ENCODE measurements at regions of chr14 and their contacts with region 1.

Region 1: GRCh38 chr14:37903343-37904191 is 304.1 kb upstream of the SSTR1 start:
- DNase-seq: peak in 3 of 9 experiments; percentile 5 to 63 (median 57)
- ATAC-seq: no peak
- H3K4me3 ChIP-seq: no peak overlapping the region
- H3K4me3 Mint-ChIP-seq: no peak overlapping the region
- H3K27ac ChIP-seq: no peak overlapping the region
- H3K27ac Mint-ChIP-seq: no peak overlapping the region
- H3K4me1 ChIP-seq: no peaks in the 10 kb centered on the region
- H3K4me1 Mint-ChIP-seq: peaks cover 2% of the 10 kb centered on the region
- H3K27me3 ChIP-seq: no peaks in the 10 kb centered on the region
- H3K27me3 Mint-ChIP-seq: peaks cover 26% of the 10 kb centered on the region
- CTCF ChIP-seq: peak; percentile 82

Region 2: DNA sequence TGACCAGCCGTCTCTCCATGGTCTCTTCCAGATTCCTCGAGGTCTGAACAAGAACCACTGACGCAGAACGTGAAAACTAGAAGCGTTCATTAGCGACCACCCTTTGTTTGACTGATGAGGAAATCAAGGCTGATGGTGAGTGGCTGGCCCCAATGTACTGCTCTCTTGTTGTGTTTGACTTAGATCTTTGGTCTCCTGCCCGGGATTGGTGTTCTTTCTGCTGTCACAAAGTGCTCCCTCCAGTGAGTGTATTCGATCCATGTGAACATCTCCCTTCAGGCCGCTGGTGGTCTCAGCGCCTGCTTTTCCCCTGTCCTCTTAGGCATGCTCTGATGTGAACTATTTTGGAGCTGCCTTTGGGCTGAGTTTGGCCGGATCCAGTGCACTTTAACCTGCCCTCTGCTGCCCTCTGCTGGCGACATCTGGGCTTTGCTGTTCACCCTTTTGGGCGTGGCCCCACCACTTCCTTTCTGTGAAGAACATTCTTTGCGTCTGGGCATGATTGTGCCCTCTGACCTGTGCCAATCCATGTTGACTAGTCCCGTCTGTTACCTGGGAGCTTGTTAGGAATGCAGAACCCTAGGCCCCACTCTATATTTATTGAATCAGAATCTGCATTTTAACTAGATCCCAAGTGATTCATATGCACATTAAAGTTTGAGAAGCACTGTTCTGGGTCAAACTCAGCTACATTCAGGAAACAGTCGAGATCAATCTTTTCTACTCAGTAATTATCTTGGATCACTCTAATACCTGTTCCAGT is 29.0 kb before region 1 on chr14:
- CTCF ChIA-PET with region 1: interaction called, 5 read pairs
- POLR2A ChIA-PET with region 1: no interaction called
- intact Hi-C with region 1: loop called in 1 of 2 experiments (anchors 1 kb)
- DNase-seq: peak; percentile 37 to 81 (median 71)
- ATAC-seq: peak; percentile 78
- H3K4me3 ChIP-seq: no peak overlapping the region
- H3K4me3 Mint-ChIP-seq: no peak overlapping the region
- H3K27ac ChIP-seq: no peak overlapping the region
- H3K27ac Mint-ChIP-seq: no peak overlapping the region
- H3K4me1 ChIP-seq: no peaks in the 10 kb centered on the region
- H3K4me1 Mint-ChIP-seq: peaks cover 6% of the 10 kb centered on the region
- H3K27me3 ChIP-seq: no peaks in the 10 kb centered on the region
- H3K27me3 Mint-ChIP-seq: peaks cover 5% of the 10 kb centered on the region
- CTCF ChIP-seq: peak; percentile 61

Region 3: DNA sequence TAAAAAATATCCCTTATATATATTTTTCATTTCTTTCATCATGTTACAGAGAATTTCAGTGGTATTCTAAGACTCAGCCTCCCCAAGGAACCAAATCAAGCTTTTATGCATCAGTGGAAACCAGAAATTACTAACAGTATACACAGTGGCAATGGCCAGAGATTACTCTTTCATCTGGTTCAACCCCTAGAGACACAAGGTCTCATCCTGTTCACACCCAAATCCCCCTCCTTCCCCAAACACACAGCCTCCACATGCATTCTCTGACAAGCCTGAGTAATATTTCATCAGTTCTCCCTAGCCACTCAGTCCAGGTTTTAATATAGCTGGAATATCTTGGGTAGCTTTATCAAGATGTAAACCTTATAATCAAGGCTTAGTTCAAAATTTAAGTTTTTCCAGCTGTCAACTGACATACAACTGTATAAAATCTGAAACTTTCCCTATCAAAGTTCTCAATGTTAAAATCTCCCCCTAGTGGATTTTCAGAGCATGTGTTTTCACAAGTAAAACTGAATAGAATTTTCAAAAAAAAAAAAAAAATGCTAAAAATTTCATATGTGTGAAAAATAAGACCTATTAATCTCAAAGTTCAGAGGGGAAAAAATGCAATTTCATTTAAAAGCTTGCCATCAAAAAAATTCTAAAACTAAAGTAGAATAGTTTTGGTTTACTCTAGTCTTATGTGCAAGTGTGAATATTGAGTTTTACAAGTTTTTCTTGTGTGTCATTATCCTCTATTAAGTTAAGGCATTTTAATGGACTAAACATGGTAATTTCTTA is 293.6 kb after region 1 on chr14:
- CTCF ChIA-PET with region 1: interaction called, 5 read pairs
- POLR2A ChIA-PET with region 1: no interaction called
- intact Hi-C with region 1: loop called (anchors 1 kb)
- DNase-seq: peak in 2 of 9 experiments; percentile 18 to 41
- ATAC-seq: no peak
- H3K4me3 ChIP-seq: no peak overlapping the region
- H3K4me3 Mint-ChIP-seq: no peak overlapping the region
- H3K27ac ChIP-seq: no peak overlapping the region
- H3K27ac Mint-ChIP-seq: no peak overlapping the region
- H3K4me1 ChIP-seq: peaks cover 4% of the 10 kb centered on the region
- H3K4me1 Mint-ChIP-seq: peaks cover 6% of the 10 kb centered on the region
- H3K27me3 ChIP-seq: no peaks in the 10 kb centered on the region
- H3K27me3 Mint-ChIP-seq: no peaks in the 10 kb centered on the region
- CTCF ChIP-seq: peak; percentile 77

Region 4: GRCh38 chr14:38867561-38868150 is 964.1 kb after region 1 on chr14:
- CTCF ChIA-PET with region 1: interaction called, 34 read pairs
- POLR2A ChIA-PET with region 1: no interaction called
- intact Hi-C with region 1: loop called in 1 of 2 experiments (anchors 1 kb)
- DNase-seq: peak in 8 of 9 experiments; percentile 26 to 70 (median 48)
- ATAC-seq: peak; percentile 34
- H3K4me3 ChIP-seq: no peak overlapping the region
- H3K4me3 Mint-ChIP-seq: no peak overlapping the region
- H3K27ac ChIP-seq: no peak overlapping the region
- H3K27ac Mint-ChIP-seq: no peak overlapping the region
- H3K4me1 ChIP-seq: no peaks in the 10 kb centered on the region
- H3K4me1 Mint-ChIP-seq: no peaks in the 10 kb centered on the region
- H3K27me3 ChIP-seq: no peaks in the 10 kb centered on the region
- H3K27me3 Mint-ChIP-seq: peaks cover 2% of the 10 kb centered on the region
- CTCF ChIP-seq: peak; percentile 74

Region 5: GRCh38 chr14:39015360-39015961 is 1111.9 kb after region 1 on chr14:
- CTCF ChIA-PET with region 1: interaction called, 3 read pairs
- POLR2A ChIA-PET with region 1: no interaction called
- intact Hi-C with region 1: loop called in 1 of 2 experiments (anchors 1 kb)
- DNase-seq: peak in 2 of 9 experiments; percentile 32 to 51
- ATAC-seq: no peak
- H3K4me3 ChIP-seq: no peak overlapping the region
- H3K4me3 Mint-ChIP-seq: no peak overlapping the region
- H3K27ac ChIP-seq: no peak overlapping the region
- H3K27ac Mint-ChIP-seq: no peak overlapping the region
- H3K4me1 ChIP-seq: no peaks in the 10 kb centered on the region
- H3K4me1 Mint-ChIP-seq: no peaks in the 10 kb centered on the region
- H3K27me3 ChIP-seq: no peaks in the 10 kb centered on the region
- H3K27me3 Mint-ChIP-seq: no peaks in the 10 kb centered on the region
- CTCF ChIP-seq: peak; percentile 83

Measured in CD8-positive, alpha-beta T cell (primary cell).